Astrocyte of the cerebellum (primary cell): ENCODE measurements at regions of chr6 and their contacts with region 1.

Region 1: GRCh38 chr6:30730601-30731435 is 10.7 kb downstream of the TUBB start:
- DNase-seq: no peak
- H3K4me3 ChIP-seq: no peak overlapping the region
- CTCF ChIP-seq: no peak

Region 2: DNA sequence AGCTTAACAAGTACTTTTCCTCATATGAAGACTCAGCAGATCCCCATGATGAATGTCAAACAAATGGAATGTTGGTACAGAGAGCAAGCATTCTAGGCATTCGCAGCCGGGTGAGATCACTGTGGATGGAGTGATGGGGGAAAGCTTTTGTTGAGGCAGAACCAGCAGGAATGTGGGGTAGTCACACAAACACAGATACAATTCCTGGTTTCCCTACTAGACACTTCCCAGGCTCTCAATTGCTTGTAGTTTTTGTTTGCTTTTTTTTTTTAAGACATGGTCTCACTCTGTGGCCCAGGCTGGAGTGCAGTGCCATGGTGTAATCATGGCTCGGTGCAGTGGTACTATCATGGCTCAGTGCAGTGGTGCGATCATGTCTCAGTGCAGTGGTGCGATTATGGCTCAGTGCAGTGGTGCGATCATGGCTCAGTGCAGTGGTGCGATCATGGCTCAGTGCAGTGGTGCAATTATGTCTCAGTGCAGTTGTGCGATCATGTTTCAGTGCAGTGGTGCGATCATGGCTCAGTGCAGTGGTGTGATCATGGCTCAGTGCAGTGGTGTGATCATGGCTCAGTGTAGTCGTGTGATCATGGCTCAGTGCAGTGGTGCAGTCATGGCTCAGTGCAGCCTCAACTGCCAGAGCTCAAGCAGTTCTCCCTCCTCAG is 28.9 kb after region 1 on chr6:
- in situ Hi-C with region 1: no loop called
- DNase-seq: peak; percentile 90
- H3K4me3 ChIP-seq: no peak overlapping the region
- CTCF ChIP-seq: no peak

Region 3: GRCh38 chr6:30781743-30782424 is 51.1 kb after region 1 on chr6:
- in situ Hi-C with region 1: loop called (anchors 10 kb)
- DNase-seq: peak; percentile 98
- H3K4me3 ChIP-seq: no peak overlapping the region
- CTCF ChIP-seq: no peak

Region 4: DNA sequence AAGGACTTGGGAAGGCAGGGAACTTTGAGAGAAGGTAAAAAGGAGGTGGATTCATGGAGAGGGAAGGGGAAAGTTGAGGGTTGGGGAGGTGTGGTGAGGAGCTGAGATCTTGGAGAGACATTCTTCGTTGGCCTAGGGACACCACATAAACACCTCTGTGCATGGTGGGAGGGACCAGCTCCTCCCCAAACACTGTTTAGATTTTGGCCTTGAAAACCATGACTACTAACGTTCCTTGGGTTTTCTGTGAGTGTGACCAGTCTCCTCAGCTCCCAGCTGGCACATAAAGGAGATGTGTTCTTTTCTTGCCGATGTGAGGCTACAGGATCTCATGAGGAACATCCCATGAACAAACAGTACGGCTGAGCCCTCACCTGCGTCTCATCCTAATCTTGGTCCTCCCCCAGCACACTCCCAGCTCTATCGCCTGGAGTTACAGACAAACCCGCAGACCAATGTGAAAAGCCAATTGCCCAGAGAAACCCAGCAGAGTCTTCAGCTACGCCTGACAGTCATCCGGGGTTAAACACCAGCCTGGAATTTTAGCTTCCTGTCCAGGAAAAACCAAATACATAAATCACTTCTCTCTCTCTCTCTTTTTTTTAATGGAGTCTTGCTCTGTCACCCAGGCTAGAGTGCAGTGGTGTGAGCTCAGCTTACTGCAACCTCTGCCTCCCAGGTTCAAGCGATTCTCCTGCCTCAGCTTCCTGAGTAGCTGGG is 131.5 kb after region 1 on chr6:
- in situ Hi-C with region 1: loop called (anchors 5 kb)
- DNase-seq: no peak
- H3K4me3 ChIP-seq: no peak overlapping the region
- CTCF ChIP-seq: no peak